Activated CD4-positive, alpha-beta memory T cell treated with anti-CD3 and anti-CD28 coated beads for 36 hours (primary cell): ENCODE measurements at regions of chr17 and their contacts with region 1.

Region 1: DNA sequence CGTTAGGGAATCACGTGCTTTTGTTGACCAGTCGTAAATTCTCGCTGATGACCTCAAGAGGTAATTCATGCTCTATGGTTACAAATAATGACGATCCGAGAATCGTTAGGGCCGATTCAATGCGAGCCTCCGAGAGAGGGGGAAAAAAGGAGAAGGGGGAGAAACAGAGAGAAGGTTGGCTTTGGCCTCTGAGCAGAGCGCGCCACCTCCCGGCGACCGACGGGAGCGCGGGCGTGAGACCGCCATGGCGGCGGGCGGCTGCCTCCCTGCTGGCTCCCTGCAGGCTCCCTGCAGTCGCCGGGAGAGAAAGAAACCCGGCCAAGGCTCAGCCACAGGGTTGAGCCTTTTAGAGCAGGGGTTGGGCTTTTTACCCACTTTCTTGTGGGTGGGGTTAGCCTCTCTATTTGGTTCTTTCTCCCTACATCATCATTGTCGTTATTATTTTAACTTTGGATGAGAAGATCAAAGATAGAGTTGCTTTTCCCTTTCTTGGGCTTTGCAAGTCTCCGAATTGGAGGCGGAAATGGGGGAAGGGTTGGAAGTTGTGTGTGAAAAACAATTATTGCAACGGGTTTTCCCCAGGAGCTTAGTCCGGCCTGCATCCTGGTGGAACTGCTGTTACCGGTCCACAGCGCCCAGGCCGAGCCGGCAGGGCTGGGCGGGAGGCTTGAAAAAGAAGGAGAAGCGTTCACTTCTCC is 410 bp upstream of the HOXB5 start:
- DNase-seq: peak; percentile 88
- H3K4me3 Mint-ChIP-seq: peak overlapping the region; percentile 72
- H3K27ac Mint-ChIP-seq: no peak overlapping the region
- H3K4me1 Mint-ChIP-seq: peaks cover 31% of the 10 kb centered on the region
- H3K27me3 Mint-ChIP-seq: peaks cover 73% of the 10 kb centered on the region

Region 2: GRCh38 chr17:48259694-48260291 is 334.2 kb before region 1 on chr17:
- CTCF ChIA-PET with region 1: interaction called, 34 read pairs
- POLR2A ChIA-PET with region 1: no interaction called
- intact Hi-C with region 1: no loop called
- DNase-seq: no peak
- H3K4me3 Mint-ChIP-seq: no peak overlapping the region
- H3K27ac Mint-ChIP-seq: no peak overlapping the region
- H3K4me1 Mint-ChIP-seq: peaks cover 13% of the 10 kb centered on the region
- H3K27me3 Mint-ChIP-seq: no peaks in the 10 kb centered on the region

Region 3: DNA sequence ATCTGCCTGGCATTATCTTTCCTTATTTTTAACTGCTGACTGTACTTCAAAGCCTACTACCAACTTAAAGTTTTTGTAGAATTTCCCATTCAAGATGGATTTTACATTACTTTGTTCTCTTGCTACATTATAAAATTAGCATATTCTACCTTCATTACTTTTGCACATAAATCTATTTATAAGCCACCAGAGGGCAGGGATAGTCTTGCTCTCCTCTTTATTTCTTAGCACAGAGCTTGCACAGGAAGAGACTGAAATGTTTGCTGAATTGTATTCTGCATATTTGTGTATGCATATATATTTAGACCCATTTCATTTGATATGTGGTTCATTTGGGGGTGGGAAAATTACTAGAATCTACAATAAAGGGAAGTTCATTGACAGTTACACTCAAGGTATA is 271.9 kb before region 1 on chr17:
- CTCF ChIA-PET with region 1: interaction called, 13 read pairs
- POLR2A ChIA-PET with region 1: no interaction called
- intact Hi-C with region 1: no loop called
- DNase-seq: no peak
- H3K4me3 Mint-ChIP-seq: no peak overlapping the region
- H3K27ac Mint-ChIP-seq: no peak overlapping the region
- H3K4me1 Mint-ChIP-seq: peaks cover 6% of the 10 kb centered on the region
- H3K27me3 Mint-ChIP-seq: no peaks in the 10 kb centered on the region

Region 4: DNA sequence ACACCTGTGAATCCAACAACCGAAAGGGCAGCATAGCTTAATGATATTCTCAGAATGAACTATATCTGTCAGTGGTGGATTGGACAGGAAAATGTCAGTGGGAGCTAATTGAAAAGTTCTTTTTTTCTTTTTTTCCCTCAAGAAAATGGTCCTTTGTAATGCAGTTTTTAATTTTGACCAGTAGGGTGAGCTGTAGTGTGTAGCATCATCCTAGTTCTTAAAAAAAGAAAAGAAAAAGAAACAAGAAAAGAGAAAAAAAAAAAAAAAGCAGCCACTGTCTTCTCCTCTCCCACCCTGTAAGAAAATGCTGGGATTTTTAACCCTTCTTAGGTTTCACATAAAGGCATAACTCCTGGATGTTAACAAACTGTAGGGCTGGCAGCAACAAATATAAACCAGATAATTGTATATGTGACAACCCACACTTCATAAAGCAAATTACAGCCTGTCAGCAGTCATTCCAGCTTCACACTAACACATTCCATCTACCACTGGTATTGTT is 242.1 kb before region 1 on chr17:
- CTCF ChIA-PET with region 1: interaction called, 49 read pairs
- POLR2A ChIA-PET with region 1: no interaction called
- intact Hi-C with region 1: no loop called
- DNase-seq: no peak
- H3K4me3 Mint-ChIP-seq: no peak overlapping the region
- H3K27ac Mint-ChIP-seq: no peak overlapping the region
- H3K4me1 Mint-ChIP-seq: peaks cover 6% of the 10 kb centered on the region
- H3K27me3 Mint-ChIP-seq: no peaks in the 10 kb centered on the region

Region 5: DNA sequence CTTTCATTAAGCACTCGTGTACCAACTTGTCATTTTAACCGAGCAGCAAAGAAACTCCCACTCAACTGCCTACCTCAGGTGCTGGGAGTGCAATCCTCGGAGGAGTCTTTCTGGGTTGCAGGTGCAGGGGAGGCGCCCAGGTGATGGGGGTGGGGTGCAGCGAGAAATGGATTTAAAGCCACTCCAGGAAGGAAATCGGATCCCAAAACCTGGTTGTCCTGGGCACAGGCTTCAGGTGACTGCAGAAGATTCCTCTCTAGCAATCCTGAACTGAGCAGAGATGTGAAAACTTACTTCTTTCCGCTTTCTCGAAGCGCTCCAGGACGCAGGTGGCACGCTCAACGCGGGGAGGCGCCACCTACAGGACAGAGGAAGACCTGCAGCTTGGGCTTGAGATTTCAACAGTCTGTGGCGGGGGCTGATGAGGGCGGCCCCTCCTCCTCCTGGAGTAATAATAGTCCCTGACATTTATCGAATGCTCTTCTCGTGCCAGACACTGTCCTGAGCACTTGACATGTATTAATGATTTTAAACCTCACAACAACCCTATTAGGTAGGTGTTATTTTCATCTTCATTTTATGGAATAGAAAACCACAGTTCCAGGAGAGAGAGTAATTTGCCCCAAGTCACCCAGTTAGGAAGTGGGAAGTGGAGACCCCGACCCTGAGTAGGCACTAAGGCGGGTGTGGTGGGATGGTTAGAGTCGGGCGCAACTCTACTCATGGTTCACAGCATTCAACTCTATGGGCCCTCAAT is 136.7 kb before region 1 on chr17:
- CTCF ChIA-PET with region 1: interaction called, 11 read pairs
- POLR2A ChIA-PET with region 1: no interaction called
- intact Hi-C with region 1: no loop called
- DNase-seq: peak; percentile 84
- H3K4me3 Mint-ChIP-seq: peak overlapping the region; percentile 54
- H3K27ac Mint-ChIP-seq: peak overlapping the region; percentile 38
- H3K4me1 Mint-ChIP-seq: peaks cover 60% of the 10 kb centered on the region
- H3K27me3 Mint-ChIP-seq: no peaks in the 10 kb centered on the region

Region 6: DNA sequence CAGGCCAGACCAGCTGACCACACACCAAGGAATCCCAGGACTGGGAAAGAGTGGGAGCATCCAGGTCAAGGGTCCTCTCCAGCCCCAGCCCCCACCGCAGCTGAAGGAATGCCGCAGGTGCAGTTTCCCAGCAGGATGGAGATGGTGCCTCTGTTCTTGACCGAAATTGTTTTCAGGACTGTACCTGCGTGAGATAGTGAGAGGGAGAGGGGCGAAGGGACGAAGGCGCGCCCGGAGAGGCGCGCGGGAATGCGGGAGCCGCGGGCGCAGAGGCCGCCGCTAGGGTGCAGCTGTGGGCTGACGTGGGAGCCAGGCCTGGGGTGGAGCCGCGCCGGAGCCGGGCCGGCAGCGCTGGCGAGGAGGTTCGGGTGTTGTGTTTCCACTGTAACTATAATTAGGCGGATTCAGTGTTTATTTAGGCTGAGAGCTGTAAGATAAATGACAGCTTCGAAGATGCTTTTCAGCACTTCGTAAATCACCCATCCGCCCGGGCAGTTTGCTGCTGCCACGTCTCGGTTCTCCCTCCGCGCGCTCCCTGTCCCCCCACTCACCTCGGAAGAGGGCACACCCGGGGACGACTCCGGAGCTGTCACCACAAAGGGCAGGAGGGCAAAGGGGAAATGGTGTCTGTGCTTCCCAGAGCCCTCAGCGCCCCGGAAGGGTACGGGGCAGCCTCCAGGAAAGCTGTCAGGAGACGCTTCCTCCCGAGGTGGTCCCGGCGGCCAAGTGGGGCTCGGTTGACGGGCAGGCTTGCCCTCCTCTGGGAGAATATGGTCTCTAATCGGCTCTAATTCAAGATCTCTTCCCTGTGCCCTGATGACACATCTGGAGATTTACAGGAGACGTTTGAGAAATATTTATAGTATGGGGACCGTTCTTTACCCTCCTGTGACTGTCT is 101.3 kb before region 1 on chr17:
- CTCF ChIA-PET with region 1: interaction called, 37 read pairs
- POLR2A ChIA-PET with region 1: no interaction called
- intact Hi-C with region 1: no loop called
- DNase-seq: peak; percentile 76
- H3K4me3 Mint-ChIP-seq: peak overlapping the region; percentile 39
- H3K27ac Mint-ChIP-seq: no peak overlapping the region
- H3K4me1 Mint-ChIP-seq: peaks cover 17% of the 10 kb centered on the region
- H3K27me3 Mint-ChIP-seq: peaks cover 11% of the 10 kb centered on the region

Region 7: GRCh38 chr17:48618256-48618897 is 24.4 kb after region 1 on chr17:
- CTCF ChIA-PET with region 1: interaction called, 22 read pairs
- POLR2A ChIA-PET with region 1: interaction called, 3 read pairs
- intact Hi-C with region 1: loop called (anchors 2 kb)
- DNase-seq: peak; percentile 89
- H3K4me3 Mint-ChIP-seq: peak overlapping the region; percentile 17
- H3K27ac Mint-ChIP-seq: peak overlapping the region; percentile 40
- H3K4me1 Mint-ChIP-seq: peaks cover 42% of the 10 kb centered on the region
- H3K27me3 Mint-ChIP-seq: peaks cover 89% of the 10 kb centered on the region